Prostate gland (tissue), 2 donors: ENCODE measurements at regions of chr11 and their contacts with region 1.

Region 1: GRCh38 chr11:19566583-19567379 is 145.9 kb upstream of the NAV2 start:
- DNase-seq: no peak
- H3K4me3 ChIP-seq: no peak overlapping the region
- H3K27ac ChIP-seq: no peak overlapping the region
- H3K4me1 ChIP-seq: peaks cover 3% of the 10 kb centered on the region
- H3K27me3 ChIP-seq: no peaks in the 10 kb centered on the region
- CTCF ChIP-seq: no peak
- POLR2A ChIP-seq: no peak

Region 2: DNA sequence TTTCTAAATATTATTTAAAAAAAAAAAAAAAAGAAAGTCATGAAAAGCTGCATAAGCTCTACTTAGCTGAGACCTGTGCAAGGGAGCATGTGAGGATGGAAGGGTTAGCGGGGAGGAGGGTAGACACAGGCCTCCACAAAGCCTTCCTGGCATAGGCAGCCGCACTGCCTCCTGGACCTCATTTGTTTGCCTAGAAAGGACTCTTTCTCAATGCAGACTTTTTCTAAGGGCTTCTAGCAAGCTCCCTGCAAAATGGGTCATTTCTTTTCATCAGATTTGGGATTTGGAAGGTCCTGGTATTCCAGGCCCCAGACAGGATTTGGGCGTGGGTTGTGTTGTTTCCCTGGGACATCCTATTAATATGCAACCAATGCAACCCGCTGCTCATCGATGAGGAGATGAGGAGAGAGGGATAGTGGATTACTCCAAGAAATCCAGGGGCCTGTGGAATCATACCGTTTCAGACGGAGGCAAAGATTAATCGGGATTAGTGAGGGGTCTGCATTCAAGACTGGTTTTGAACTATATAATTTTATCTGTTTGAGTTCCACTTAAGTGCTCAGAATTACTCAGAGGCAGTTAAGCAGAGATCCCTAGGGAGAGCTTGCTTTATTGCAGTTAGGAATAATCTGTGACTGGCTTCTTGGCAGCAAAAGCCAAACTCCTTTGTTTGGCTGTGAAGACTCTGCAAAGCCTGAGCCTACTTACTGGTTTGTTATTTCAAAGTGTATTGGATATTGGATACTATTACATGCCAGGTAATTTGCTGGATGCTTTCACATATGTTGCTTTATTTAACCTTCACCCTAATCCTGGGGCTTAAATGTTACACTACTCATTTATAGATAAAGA is 39.0 kb after region 1 on chr11:
- intact Hi-C with region 1: loop called (anchors 5 kb)
- DNase-seq: peak; percentile 30
- H3K4me3 ChIP-seq: no peak overlapping the region
- H3K27ac ChIP-seq: peak overlapping the region; percentile 68 to 74
- H3K4me1 ChIP-seq: peaks cover 25% of the 10 kb centered on the region
- H3K27me3 ChIP-seq: no peaks in the 10 kb centered on the region
- CTCF ChIP-seq: no peak
- POLR2A ChIP-seq: no peak

Region 3: GRCh38 chr11:19903620-19904069 is 336.9 kb after region 1 on chr11:
- intact Hi-C with region 1: loop called (anchors 2 kb)
- DNase-seq: peak; percentile 60
- H3K4me3 ChIP-seq: no peak overlapping the region
- H3K27ac ChIP-seq: no peak overlapping the region
- H3K4me1 ChIP-seq: no peaks in the 10 kb centered on the region
- H3K27me3 ChIP-seq: no peaks in the 10 kb centered on the region
- CTCF ChIP-seq: peak; percentile 23 to 69 (median 63)
- POLR2A ChIP-seq: no peak